Left colon (tissue), 2 donors: ENCODE measurements at regions of chr12 and their contacts with region 1.

Region 1: GRCh38 chr12:818733-819132 is 66.4 kb downstream of the WNK1 start:
- DNase-seq: no peak
- ATAC-seq: no peak

Region 2: GRCh38 chr12:851913-852312 is 33.2 kb after region 1 on chr12:
- intact Hi-C with region 1: loop called in 1 of 2 experiments (anchors 5 kb)
- DNase-seq: no peak
- ATAC-seq: no peak

Region 3: DNA sequence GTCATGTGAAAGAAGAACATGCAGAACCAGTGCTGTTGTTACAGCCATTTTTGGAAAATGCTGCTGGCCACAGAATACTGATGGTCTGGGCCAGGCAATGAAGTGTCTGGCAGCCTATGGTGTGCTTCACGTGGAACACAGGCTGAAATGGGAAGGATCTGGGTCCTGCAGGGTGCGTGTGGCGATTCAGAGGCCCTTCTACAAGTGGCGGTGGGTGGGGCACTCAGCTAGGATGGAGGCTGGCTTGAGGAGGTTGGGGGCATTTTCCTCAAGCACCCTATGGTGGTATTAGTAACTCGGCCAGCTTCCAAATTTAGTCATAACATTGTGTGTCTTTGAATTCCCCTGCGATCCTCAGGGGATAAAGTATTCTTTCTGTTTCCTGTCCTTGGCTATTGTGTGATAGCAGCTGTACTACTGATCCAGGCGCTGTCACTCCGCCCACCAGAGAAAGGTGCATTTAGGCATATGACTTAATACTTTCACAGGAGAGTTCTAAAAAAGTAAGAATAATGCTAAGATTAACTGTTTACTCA is 139.9 kb after region 1 on chr12:
- intact Hi-C with region 1: no loop called
- DNase-seq: no peak
- ATAC-seq: no peak

Region 4: GRCh38 chr12:1360441-1361211 is 541.9 kb after region 1 on chr12:
- intact Hi-C with region 1: no loop called
- DNase-seq: no peak
- ATAC-seq: no peak